GM10248 (cell line): ENCODE measurements at regions of chr1 and their contacts with region 1.

Region 1: GRCh38 chr1:66282343-66282852 is 251.6 kb upstream of the SGIP1 start:
- DNase-seq: peak; percentile 65
- CTCF ChIP-seq: peak; percentile 26

Region 2: DNA sequence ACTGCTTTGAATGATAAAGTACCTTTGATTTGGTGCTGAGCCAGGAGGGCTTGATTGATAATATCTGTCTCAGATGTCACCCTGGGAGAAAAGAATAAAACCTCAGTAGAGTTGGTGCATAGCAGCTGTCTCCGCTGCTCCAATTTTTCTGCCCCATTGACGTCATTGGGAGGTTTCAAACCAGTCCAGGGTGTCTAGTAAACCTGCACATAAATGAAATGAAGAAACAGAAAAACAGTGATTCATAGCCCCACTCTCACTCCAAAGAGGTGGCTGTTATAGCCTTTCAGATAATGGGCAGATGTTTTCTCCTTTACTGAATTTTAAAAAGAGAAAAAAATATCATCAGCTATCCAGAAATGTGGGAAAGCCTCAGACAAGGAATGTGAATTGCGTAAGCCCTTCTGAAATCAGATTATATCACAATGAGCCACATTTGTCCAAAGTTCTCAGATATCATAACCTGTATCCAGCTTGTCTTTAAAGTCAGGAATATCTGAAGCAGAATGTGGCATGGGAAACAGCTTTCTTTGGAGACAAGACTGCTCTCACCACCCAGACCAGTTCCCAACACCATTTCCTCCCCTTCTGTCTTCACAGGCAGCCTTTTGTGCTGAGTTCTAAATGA is 99.7 kb before region 1 on chr1:
- CTCF ChIA-PET with region 1: no interaction called
- POLR2A ChIA-PET with region 1: no interaction called
- DNase-seq: no peak
- CTCF ChIP-seq: no peak

Region 3: DNA sequence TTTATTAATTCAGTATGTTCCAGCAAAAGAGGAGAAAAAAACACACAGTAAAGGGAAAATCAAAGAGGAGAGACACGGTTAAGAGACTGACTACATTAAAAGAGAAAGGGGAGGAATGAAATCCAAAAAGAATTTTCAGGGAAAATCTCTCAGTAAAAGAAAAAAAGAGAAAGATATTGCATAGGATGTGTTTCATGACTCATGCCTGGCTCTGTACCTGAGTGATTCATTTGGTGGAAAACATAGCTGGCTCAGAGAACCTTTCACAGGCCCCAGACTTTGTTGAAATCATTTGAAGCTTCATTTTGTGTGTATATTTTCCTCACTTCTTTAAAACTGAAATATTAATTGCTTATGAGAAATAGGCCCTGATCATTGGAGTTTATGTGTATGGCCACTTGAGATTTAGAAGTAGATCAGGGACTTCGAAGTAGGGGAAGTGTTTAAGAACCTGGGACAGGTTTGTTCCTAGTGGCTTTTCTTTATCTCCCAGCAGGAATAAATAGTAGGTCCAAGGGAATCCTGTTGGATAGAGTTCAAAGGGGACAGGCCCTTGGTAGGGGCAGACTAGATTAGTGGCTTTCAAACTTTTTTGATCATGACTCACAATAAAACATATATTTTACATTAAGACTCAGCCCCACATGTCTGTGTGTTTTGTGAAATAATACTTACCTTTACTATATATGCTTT is 12.4 kb after region 1 on chr1:
- CTCF ChIA-PET with region 1: interaction called, 11 read pairs
- POLR2A ChIA-PET with region 1: interaction called, 3 read pairs
- DNase-seq: no peak
- CTCF ChIP-seq: no peak